Activated CD4-positive, alpha-beta T cell treated with anti-CD3 and anti-CD28 coated beads for 36 hours (primary cell): ENCODE measurements at regions of chr5 and their contacts with region 1.

Region 1: DNA sequence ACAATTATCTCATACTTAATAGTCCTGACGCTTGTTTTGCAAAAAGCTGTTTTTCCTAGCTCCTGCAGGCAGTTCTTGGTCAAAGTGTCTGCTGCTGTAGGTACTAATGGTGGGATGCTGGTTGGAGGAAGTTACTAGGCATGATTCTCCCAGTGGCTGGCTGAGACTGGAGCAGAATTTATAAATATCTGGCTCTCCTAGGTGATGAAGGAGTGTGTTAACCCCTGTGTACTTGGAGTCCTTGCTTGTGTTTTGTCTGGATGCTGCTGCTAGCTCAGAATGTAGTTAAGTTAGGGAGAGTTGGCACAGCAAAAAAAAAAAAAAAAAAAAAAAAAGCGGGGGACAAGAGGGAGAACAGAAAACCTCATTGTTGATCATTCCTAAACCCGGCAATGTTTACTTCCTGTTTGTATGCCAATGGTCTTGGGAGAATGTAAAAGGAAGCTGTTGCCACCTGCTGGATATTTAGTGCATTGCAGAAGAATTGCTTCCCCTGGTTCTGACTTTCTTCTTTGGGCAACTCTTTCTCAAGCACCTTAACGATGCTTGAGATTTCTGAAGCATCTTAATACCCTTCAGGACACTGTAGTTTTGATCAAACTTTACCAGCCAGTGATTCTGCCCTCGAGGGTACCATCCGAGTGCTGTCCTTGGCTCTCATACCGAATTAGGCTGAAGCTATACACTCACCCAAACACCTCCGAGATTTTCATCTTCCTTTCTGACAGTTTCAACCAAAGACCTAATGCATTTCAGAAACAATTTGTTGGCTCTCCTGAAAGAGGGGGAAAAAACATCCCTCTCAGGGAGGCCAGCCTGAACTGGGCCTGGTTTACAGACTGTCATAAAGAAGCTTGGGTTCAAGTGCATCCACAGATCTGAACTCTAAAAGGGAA is 71.7 kb upstream of the WWC1 start:
- DNase-seq: peak; percentile 58
- ATAC-seq: peak; percentile 78
- H3K4me3 Mint-ChIP-seq: no peak overlapping the region
- H3K27ac Mint-ChIP-seq: no peak overlapping the region
- H3K4me1 Mint-ChIP-seq: no peaks in the 10 kb centered on the region
- H3K27me3 Mint-ChIP-seq: no peaks in the 10 kb centered on the region

Region 2: DNA sequence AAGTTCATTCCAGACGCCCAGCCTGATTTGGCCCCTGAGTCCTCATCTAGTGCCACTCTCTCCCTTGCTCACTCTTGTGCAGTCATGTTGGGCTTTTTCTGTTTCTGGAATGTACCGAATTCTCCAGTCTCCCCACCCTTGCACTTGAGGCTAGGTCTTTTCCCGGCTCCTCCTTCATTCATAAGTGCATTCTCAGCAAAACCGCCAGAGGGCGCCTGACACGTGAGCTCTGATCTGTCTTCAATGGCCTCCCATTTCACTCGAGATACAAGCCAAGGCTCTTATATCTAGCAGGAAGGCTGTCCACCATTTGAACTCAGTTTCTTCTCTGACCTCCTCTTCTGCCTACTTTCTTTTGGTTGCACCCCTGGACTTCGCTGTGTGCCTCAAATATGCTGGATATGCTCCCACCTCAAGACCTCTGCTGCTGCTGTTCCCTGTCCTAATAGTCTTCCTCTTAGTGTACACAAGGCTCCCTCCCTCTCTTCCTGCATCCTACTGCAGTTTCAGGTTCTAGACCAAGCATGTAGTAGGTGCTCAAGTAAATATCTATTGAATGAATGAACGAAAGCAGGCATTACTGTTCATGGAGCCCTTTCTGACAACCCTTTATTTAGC is 496.4 kb before region 1 on chr5:
- CTCF ChIA-PET with region 1: interaction called, 16 read pairs
- POLR2A ChIA-PET with region 1: no interaction called
- intact Hi-C with region 1: loop called (anchors 1 kb)
- DNase-seq: peak; percentile 81
- ATAC-seq: peak; percentile 87
- H3K4me3 Mint-ChIP-seq: no peak overlapping the region
- H3K27ac Mint-ChIP-seq: no peak overlapping the region
- H3K4me1 Mint-ChIP-seq: peaks cover 4% of the 10 kb centered on the region
- H3K27me3 Mint-ChIP-seq: peaks cover 5% of the 10 kb centered on the region

Region 3: GRCh38 chr5:168006456-168007130 is 213.2 kb before region 1 on chr5:
- CTCF ChIA-PET with region 1: no interaction called
- POLR2A ChIA-PET with region 1: no interaction called
- intact Hi-C with region 1: no loop called
- DNase-seq: no peak
- ATAC-seq: no peak
- H3K4me3 Mint-ChIP-seq: no peak overlapping the region
- H3K27ac Mint-ChIP-seq: no peak overlapping the region
- H3K4me1 Mint-ChIP-seq: no peaks in the 10 kb centered on the region
- H3K27me3 Mint-ChIP-seq: peaks cover 2% of the 10 kb centered on the region

Region 4: DNA sequence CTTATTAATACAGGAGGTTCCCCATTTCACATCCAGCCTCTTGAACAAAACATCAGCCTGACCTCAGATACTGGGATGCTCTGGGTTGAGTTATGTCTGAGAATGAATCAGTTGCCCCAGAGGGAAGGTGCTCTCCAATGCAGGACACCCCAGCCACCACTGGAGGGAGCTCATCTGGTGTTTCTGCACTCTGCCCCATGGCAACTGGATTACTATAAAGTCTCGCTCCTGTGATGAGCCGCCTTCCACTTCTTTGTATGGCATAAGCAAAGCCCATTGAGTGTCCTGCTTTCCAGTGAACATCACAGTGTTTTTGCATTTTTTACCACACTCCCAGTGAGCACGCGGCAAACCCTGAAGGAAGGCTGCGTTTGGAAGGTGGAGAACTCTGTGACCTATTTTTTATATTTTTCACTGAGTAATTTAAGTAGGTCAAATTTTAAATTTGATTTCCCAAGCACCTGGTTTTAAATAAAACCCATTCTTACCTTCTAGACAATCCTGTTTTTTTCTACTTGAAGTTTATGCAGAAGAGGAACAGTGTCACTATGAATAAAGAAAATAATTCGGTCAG is 105.2 kb before region 1 on chr5:
- CTCF ChIA-PET with region 1: interaction called, 11 read pairs
- POLR2A ChIA-PET with region 1: no interaction called
- intact Hi-C with region 1: loop called (anchors 1 kb)
- DNase-seq: peak; percentile 80
- ATAC-seq: peak; percentile 94
- H3K4me3 Mint-ChIP-seq: no peak overlapping the region
- H3K27ac Mint-ChIP-seq: no peak overlapping the region
- H3K4me1 Mint-ChIP-seq: no peaks in the 10 kb centered on the region
- H3K27me3 Mint-ChIP-seq: peaks cover 16% of the 10 kb centered on the region

Region 5: DNA sequence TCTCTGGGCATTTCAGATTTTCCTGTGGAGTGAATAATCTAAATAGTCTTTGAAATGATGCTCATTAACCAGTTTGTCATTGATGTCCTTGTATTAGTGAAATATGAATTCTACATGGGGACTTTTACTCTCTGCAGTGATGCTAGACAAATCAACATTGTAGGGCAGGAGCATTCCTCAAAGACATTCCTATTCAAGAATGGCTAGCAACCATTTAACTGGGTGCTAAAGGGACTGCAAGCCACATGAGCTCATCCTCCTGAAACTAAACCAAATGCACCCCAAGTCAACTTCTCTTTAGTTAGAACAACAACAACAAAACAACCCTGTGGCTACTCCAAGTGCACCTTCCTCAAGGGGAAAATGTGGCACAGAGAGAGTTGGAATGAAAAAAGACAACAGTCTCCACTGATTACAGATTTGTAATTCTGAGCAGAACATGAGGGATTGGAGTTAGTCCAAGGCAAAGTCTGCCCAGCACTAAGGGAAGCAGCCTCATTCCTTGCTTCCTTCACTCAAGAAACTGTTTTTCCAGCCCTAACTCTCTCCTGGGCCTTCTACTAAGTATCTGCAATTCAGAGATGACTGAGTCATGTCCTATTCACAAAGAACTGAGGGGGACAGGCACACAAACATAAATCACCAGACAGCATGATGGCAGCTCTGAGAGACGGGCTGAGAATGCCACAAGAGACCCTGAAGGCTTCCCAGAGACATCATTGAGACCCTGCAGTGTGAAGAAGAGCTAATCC is 10.3 kb before region 1 on chr5:
- CTCF ChIA-PET with region 1: interaction called, 13 read pairs
- POLR2A ChIA-PET with region 1: no interaction called
- intact Hi-C with region 1: no loop called
- DNase-seq: no peak
- ATAC-seq: no peak
- H3K4me3 Mint-ChIP-seq: no peak overlapping the region
- H3K27ac Mint-ChIP-seq: no peak overlapping the region
- H3K4me1 Mint-ChIP-seq: no peaks in the 10 kb centered on the region
- H3K27me3 Mint-ChIP-seq: peaks cover 8% of the 10 kb centered on the region